Posterior vena cava (tissue), 2 donors: ENCODE measurements at regions of chr16 and their contacts with region 1.

Region 1: DNA sequence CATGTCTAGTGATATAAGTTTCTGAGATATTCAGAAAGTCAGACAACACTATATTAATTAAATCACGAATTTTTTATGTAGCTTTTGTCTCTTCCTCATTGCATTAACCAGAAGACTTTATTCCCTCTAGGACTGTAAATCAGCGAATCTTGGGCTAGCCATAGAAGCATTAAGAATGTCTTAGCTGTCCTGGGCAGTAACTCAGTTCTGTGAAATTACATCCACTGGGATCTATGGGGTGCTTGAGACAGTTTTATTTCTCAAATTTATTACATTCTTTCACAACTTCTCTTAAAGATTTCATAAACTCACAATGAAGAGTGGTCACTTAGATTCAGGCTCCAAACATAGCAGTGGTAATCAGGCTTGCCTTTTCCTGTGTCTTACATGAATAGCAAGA is 1153.4 kb downstream of the CDH8 start:
- DNase-seq: no peak

Region 2: DNA sequence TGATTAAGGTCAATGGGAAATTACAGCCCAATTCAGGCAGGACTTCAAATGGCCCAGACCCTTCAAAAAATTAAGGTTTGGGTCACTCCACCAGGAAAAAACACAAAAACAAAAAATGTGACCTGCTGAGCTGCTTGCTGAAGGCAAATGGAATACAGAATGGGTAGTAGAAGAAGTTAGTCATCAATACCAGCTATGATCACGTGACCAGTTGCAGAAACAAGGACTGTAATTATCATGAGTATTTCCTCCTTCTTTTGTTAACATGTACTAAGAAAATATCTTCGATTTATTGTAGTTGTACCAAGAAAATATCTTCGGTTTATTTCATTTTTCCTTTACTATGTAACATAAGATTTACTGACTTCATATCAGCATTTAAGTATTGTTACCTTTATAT is 30.2 kb before region 1 on chr16:
- intact Hi-C with region 1: no loop called
- DNase-seq: no peak

Region 3: DNA sequence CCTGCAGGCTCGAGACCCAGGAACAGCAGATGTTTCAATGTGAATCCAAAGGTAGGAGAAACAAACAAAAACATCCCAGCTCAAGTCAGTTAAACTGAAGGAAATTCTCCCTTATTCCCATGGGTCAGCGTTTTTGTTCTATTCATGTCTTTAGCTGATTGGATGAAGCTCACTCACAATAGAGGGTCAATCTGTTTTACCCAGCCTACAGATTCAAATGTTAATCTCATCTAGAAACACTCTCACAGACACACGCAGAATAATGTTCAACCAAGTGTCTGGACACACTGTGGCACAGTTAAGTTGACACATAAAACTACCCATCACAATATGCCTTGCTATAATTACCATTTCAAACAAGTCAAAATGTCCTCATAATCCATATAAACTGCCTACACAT is 1334.0 kb after region 1 on chr16:
- intact Hi-C with region 1: loop called in 1 of 2 experiments (anchors 5 kb)
- DNase-seq: no peak